HepG2 (cell line): ENCODE measurements at regions of chr1 and their contacts with region 1.

Region 1: GRCh38 chr1:97186404-97186803 is 464.8 kb downstream of the PTBP2 start:
- DNase-seq: peak; percentile 3
- ATAC-seq: no peak; the same call in 2 of the 3 replicates
- H3K4me3 ChIP-seq: no peak overlapping the region
- H3K27ac ChIP-seq: no peak overlapping the region
- H3K4me1 ChIP-seq: no peaks in the 10 kb centered on the region
- H3K27me3 ChIP-seq: no peaks in the 10 kb centered on the region; a peak in 1 of 5 replicates
- CTCF ChIP-seq: peak; percentile 33
- EP300 ChIP-seq: no peak
- POLR2A ChIP-seq: no peak
- RAD21 ChIP-seq: 0 out of 2 replicates have a peak, but pooled peaks have one; percentile 15

Region 2: DNA sequence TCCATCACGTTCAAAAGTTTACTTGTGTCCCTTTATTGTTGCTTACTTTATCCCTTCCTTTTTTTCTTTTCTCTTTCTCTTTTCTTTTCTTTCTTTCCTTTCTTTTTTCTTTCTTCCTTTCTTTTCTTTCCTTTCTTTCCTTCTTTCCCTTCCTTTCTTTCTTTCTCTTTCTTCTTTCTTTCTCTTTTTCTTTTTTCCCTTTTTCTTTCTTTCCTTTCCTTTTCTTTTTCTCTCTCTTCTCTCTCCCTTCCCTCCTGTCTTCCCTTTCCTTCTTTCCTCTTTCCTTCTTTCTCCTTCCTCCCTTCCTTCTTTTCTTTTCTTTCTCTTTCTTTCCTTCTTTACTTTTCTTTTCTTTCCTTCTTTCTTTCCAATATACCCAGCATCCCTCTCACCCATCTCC is 343.2 kb after region 1 on chr1:
- CTCF ChIA-PET with region 1: no interaction called
- POLR2A ChIA-PET with region 1: no interaction called
- in situ Hi-C with region 1: no loop called
- intact Hi-C with region 1: loop called (anchors 5 kb)
- DNase-seq: no peak
- ATAC-seq: no peak
- H3K4me3 ChIP-seq: no peak overlapping the region
- H3K27ac ChIP-seq: no peak overlapping the region
- H3K4me1 ChIP-seq: no peaks in the 10 kb centered on the region
- H3K27me3 ChIP-seq: no peaks in the 10 kb centered on the region
- CTCF ChIP-seq: no peak
- EP300 ChIP-seq: no peak
- POLR2A ChIP-seq: no peak
- RAD21 ChIP-seq: no peak